Endothelial cell of umbilical vein (primary cell): ENCODE measurements at regions of chr2 and their contacts with region 1.

Region 1: DNA sequence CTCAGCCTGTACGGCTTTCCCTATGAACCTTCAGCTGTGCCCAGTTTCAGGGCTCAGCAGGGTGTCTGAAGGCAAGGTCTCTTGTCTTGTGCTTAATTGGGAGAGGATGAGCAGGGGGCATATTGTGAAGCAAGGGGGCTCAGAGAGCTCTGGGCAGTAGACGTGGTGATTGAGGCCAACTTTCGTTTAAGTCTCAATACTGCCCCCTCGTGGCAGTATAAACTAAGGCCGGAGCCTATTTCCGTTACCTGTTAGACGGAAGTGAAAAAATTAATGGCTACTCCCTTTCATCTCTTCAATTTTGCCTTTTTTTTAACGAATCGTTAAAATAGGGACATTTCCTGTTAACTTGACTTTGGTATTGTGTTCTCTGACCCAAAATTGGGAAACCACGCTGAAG is 193.4 kb downstream of the TDRD15 start:
- DNase-seq: peak; percentile 3
- H3K4me3 ChIP-seq: no peak overlapping the region
- H3K27ac ChIP-seq: no peak overlapping the region
- H3K4me1 ChIP-seq: no peaks in the 10 kb centered on the region
- H3K27me3 ChIP-seq: no peaks in the 10 kb centered on the region
- CTCF ChIP-seq: peak; percentile 37 to 44
- POLR2A ChIP-seq: no peak

Region 2: GRCh38 chr2:21118302-21118920 is 198.7 kb before region 1 on chr2:
- CTCF ChIA-PET with region 1: no interaction called
- POLR2A ChIA-PET with region 1: no interaction called
- dilution Hi-C with region 1: no loop called
- intact Hi-C with region 1: loop called (anchors 2 kb)
- DNase-seq: peak; percentile 59
- H3K4me3 ChIP-seq: no peak overlapping the region
- H3K27ac ChIP-seq: no peak overlapping the region
- H3K4me1 ChIP-seq: no peaks in the 10 kb centered on the region
- H3K27me3 ChIP-seq: no peaks in the 10 kb centered on the region
- CTCF ChIP-seq: peak; percentile 18 to 45
- POLR2A ChIP-seq: no peak

Region 3: GRCh38 chr2:21165350-21165749 is 151.8 kb before region 1 on chr2:
- CTCF ChIA-PET with region 1: no interaction called
- POLR2A ChIA-PET with region 1: no interaction called
- dilution Hi-C with region 1: no loop called
- intact Hi-C with region 1: no loop called
- DNase-seq: peak; percentile 11
- H3K4me3 ChIP-seq: no peak overlapping the region
- H3K27ac ChIP-seq: no peak overlapping the region
- H3K4me1 ChIP-seq: no peaks in the 10 kb centered on the region
- H3K27me3 ChIP-seq: no peaks in the 10 kb centered on the region
- CTCF ChIP-seq: no peak
- POLR2A ChIP-seq: no peak

Region 4: DNA sequence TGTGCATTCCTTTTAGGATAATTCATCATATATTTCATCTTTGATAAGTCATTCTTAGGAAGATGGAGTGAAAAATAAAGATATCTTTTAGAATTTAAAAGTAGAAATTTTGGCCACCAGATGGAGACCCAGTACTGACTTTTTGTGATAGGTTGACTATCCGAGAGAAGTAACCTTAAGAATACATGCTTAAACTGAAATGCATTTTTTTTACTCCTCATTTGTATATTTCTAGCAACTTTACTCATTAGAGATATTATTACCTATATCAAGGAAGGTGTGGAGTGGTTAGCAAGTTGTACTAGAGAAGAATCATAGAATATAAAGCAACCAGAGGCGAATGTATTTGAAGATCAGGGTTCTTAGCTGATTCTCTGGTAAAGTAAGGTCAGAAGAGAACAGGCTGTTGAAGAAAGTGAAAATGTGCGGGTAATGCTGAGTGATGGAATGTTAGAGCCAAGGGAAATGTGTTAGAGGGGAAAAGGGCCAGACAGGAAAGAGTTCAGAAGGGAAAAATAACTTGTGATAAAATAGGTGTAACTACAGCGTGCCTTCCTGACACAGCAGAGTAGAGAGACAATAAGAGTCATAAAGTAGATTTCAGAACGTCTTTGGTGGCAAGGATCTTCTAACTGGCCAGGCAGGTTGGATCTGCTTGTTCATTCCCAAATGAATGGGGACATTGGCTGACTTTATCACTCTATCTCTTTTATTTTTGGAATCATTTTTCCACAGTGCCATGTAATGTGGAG is 141.1 kb before region 1 on chr2:
- CTCF ChIA-PET with region 1: no interaction called
- POLR2A ChIA-PET with region 1: no interaction called
- dilution Hi-C with region 1: no loop called
- intact Hi-C with region 1: loop called (anchors 1 kb)
- DNase-seq: peak; percentile 5
- H3K4me3 ChIP-seq: no peak overlapping the region
- H3K27ac ChIP-seq: no peak overlapping the region
- H3K4me1 ChIP-seq: no peaks in the 10 kb centered on the region
- H3K27me3 ChIP-seq: no peaks in the 10 kb centered on the region
- CTCF ChIP-seq: no peak
- POLR2A ChIP-seq: no peak

Region 5: GRCh38 chr2:21301871-21302455 is 15.2 kb before region 1 on chr2:
- CTCF ChIA-PET with region 1: no interaction called
- POLR2A ChIA-PET with region 1: no interaction called
- dilution Hi-C with region 1: no loop called
- intact Hi-C with region 1: no loop called
- DNase-seq: no peak
- H3K4me3 ChIP-seq: no peak overlapping the region
- H3K27ac ChIP-seq: no peak overlapping the region
- H3K4me1 ChIP-seq: no peaks in the 10 kb centered on the region
- H3K27me3 ChIP-seq: no peaks in the 10 kb centered on the region
- CTCF ChIP-seq: no peak
- POLR2A ChIP-seq: no peak